A549 (cell line): ENCODE measurements at regions of chr1 and their contacts with region 1.

Region 1: DNA sequence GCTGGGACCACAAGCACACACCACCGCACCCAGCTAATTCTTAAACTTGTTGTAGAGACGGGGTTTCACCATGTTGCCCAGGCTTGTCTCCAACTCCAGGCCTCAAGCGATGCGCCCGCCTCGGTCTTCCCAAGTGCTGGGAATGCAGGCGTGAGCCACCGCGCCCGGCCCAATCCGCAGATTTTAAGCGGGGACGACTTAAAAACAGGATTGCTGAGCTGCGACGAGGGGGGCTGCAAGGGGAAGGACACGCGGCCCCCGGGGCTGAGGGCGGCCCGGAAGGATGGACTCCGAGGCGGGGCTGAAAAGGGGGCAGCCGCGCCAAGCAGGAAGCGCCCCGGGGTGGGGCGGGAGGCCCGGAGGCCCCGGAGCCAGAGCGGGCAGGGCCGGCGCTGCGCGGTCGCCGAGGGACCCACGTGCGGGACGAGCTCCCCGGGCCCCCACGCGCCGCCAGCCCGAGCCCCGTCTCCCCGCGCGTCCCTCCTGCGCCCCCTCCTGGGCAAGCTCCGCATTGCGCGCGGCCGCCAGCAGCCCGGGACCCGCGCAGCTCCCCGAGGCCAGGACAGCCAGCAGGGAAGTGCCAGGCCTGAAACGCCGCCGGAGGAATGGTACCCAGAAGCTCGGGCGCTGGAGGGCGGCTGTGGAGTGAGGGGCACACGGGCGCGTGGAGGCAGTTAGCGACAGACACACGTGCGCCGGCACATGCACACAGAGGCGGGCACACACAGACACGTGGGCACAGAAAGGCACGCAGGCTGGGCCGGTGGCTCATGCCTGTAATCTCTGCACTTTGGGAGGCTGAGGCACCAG is 5.5 kb upstream of the PRKCZ start:
- DNase-seq: peak; percentile 39 to 53
- ATAC-seq: peak; percentile 53 to 70; a peak in 4 of 6 replicates
- H3K4me3 ChIP-seq: peak overlapping the region; percentile 29; the same call in 2 of the 3 replicates
- H3K27ac ChIP-seq: peak overlapping the region; percentile 56 to 89; a peak in 5 of 6 replicates
- H3K4me1 ChIP-seq: no peaks in the 10 kb centered on the region
- CTCF ChIP-seq: peak; percentile 66
- EP300 ChIP-seq: no peak
- POLR2A ChIP-seq: no peak
- RAD21 ChIP-seq: peak; percentile 52 to 70

Region 2: GRCh38 chr1:1929639-1930471 is 114.9 kb before region 1 on chr1:
- CTCF ChIA-PET with region 1: interaction called, 12 read pairs
- POLR2A ChIA-PET with region 1: interaction called, 3 read pairs
- DNase-seq: no peak
- ATAC-seq: peak in 1 of 2 experiments; percentile 16; a peak in 1 of 6 replicates
- H3K4me3 ChIP-seq: no peak overlapping the region
- H3K27ac ChIP-seq: no peak overlapping the region
- H3K4me1 ChIP-seq: no peaks in the 10 kb centered on the region
- CTCF ChIP-seq: no peak
- EP300 ChIP-seq: no peak
- POLR2A ChIP-seq: no peak
- RAD21 ChIP-seq: no peak

Region 3: GRCh38 chr1:1954831-1955441 is 89.8 kb before region 1 on chr1:
- CTCF ChIA-PET with region 1: interaction called, 127 read pairs
- POLR2A ChIA-PET with region 1: interaction called, 5 read pairs
- DNase-seq: no peak
- ATAC-seq: peak in 1 of 2 experiments; percentile 49; a peak in 3 of 6 replicates
- H3K4me3 ChIP-seq: no peak overlapping the region
- H3K27ac ChIP-seq: no peak overlapping the region
- H3K4me1 ChIP-seq: 0 out of 3 replicates have a peak, but pooled peaks cover 3% of the 10 kb centered on the region
- CTCF ChIP-seq: no peak
- EP300 ChIP-seq: no peak
- POLR2A ChIP-seq: no peak
- RAD21 ChIP-seq: no peak

Region 4: GRCh38 chr1:2019172-2019543 is 25.6 kb before region 1 on chr1 and contains the start of gene GABRD:
- CTCF ChIA-PET with region 1: interaction called, 20 read pairs
- POLR2A ChIA-PET with region 1: no interaction called
- DNase-seq: no peak
- ATAC-seq: 0 out of 6 replicates have a peak, but pooled peaks of 1 of the 2 experiments have one; percentile 15
- H3K4me3 ChIP-seq: peak within 1 kb of the TSS; percentile 53
- H3K27ac ChIP-seq: peak within 1 kb of the TSS in 1 of 2 experiments; percentile 78; a peak in 3 of 6 replicates
- H3K4me1 ChIP-seq: 0 out of 3 replicates have a peak, but pooled peaks cover 6% of the 10 kb centered on the region
- CTCF ChIP-seq: no peak
- EP300 ChIP-seq: no peak
- POLR2A ChIP-seq: no peak
- RAD21 ChIP-seq: no peak
- polyA plus RNA-seq, gene GABRD: 0.12 and 0.17 TPM in 2 replicates

Region 5: GRCh38 chr1:2055911-2056575 is 11.3 kb after region 1 on chr1:
- CTCF ChIA-PET with region 1: interaction called, 17 read pairs
- POLR2A ChIA-PET with region 1: no interaction called
- DNase-seq: no peak
- ATAC-seq: no peak
- H3K4me3 ChIP-seq: no peak overlapping the region
- H3K27ac ChIP-seq: no peak overlapping the region
- H3K4me1 ChIP-seq: 0 out of 3 replicates have a peak, but pooled peaks cover 2% of the 10 kb centered on the region
- CTCF ChIP-seq: no peak
- EP300 ChIP-seq: no peak
- POLR2A ChIP-seq: no peak
- RAD21 ChIP-seq: no peak

Region 6: DNA sequence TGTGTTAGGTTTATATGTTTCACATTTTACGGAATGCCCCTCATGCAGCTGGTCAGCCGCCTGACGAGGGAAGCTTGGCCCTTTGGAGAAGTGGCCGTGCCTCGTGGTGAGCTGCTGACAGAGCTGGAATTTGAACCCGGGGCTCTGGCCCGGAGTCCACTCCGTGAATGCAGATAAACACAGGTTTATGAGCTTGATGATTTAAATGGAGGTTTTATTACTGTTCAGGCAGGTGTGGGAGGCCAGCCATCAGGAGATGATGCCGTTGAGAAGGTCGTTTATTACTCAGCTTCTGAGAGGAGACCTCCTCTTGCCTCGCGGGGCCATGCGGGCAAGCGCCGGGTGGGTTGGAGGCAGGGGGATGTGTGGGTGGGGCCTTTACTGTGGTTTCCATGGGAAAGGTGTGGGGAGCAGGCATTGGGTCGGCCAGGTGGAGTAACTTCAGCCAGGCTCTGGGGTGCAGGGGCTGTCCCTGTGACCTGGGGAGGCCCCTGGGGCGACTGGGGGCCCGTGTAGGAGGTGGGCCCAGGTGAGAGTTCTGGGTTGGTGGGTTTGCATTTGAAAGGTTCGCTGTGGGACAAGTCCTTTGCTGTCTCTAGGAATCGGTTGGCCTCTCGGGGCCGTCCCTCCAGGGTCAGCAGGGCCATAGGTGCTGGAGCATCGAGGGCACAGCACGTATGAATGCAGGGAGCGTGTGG is 27.5 kb after region 1 on chr1:
- CTCF ChIA-PET with region 1: no interaction called
- POLR2A ChIA-PET with region 1: no interaction called
- DNase-seq: no peak
- ATAC-seq: no peak
- H3K4me3 ChIP-seq: no peak overlapping the region
- H3K27ac ChIP-seq: no peak overlapping the region
- H3K4me1 ChIP-seq: no peaks in the 10 kb centered on the region
- CTCF ChIP-seq: no peak
- EP300 ChIP-seq: no peak
- POLR2A ChIP-seq: no peak
- RAD21 ChIP-seq: no peak

Region 7: GRCh38 chr1:2255420-2256369 is 211.0 kb after region 1 on chr1:
- CTCF ChIA-PET with region 1: no interaction called
- POLR2A ChIA-PET with region 1: no interaction called
- DNase-seq: peak in 1 of 2 experiments; percentile 81
- ATAC-seq: peak; percentile 62 to 74; a peak in 5 of 6 replicates
- H3K4me3 ChIP-seq: no peak overlapping the region
- H3K27ac ChIP-seq: no peak overlapping the region
- H3K4me1 ChIP-seq: no peaks in the 10 kb centered on the region
- CTCF ChIP-seq: no peak
- EP300 ChIP-seq: no peak
- POLR2A ChIP-seq: no peak
- RAD21 ChIP-seq: no peak